HepG2 (cell line): ENCODE measurements at regions of chr1 and their contacts with region 1.

Region 1: GRCh38 chr1:201877877-201878401 is 10.8 kb upstream of the SHISA4 start:
- DNase-seq: peak; percentile 40
- ATAC-seq: peak; percentile 69
- H3K4me3 ChIP-seq: no peak overlapping the region
- H3K27ac ChIP-seq: no peak overlapping the region
- H3K4me1 ChIP-seq: no peaks in the 10 kb centered on the region
- H3K27me3 ChIP-seq: no peaks in the 10 kb centered on the region
- CTCF ChIP-seq: peak; percentile 63
- EP300 ChIP-seq: no peak
- POLR2A ChIP-seq: no peak
- RAD21 ChIP-seq: no peak

Region 2: DNA sequence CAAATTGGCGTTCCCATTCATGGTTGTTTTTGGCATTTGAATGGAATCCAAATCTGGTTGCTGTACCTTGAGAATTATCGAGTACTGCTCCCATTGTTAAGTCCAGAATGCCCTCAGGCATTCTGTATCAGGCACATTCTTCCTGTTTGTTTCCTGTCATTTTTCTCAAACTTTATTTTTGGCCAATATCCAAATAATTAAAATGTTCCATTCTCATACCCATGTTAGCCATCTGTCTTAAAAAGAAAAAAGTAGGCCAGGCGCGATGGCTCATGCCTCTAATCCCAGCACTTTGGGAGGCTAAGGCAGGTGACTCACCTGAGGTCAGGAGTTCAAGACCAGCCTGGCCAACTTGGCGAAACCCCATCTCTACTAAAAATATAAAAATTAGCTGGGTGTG is 18.5 kb before region 1 on chr1:
- CTCF ChIA-PET with region 1: no interaction called
- POLR2A ChIA-PET with region 1: no interaction called
- in situ Hi-C with region 1: no loop called
- intact Hi-C with region 1: loop called (anchors 1 kb)
- DNase-seq: no peak
- ATAC-seq: no peak
- H3K4me3 ChIP-seq: no peak overlapping the region
- H3K27ac ChIP-seq: no peak overlapping the region
- H3K4me1 ChIP-seq: peaks cover 5% of the 10 kb centered on the region
- H3K27me3 ChIP-seq: no peaks in the 10 kb centered on the region
- CTCF ChIP-seq: no peak
- EP300 ChIP-seq: no peak
- POLR2A ChIP-seq: no peak
- RAD21 ChIP-seq: no peak